K562 (cell line): ENCODE measurements at regions of chr6 and their contacts with region 1.

Region 1: GRCh38 chr6:24581084-24581669 is 64.8 kb downstream of the KIAA0319 start:
- DNase-seq: peak; percentile 54 to 83 (median 61)
- ATAC-seq: peak; percentile 97
- H3K4me3 ChIP-seq: no peak overlapping the region
- H3K27ac ChIP-seq: no peak overlapping the region
- H3K4me1 ChIP-seq: no peaks in the 10 kb centered on the region
- H3K27me3 ChIP-seq: peaks cover 14 to 20% of the 10 kb centered on the region in 2 experiments
- CTCF ChIP-seq: peak; percentile 82 to 90 (median 86)
- EP300 ChIP-seq: no peak
- POLR2A ChIP-seq: no peak
- RAD21 ChIP-seq: peak; percentile 72 to 89

Region 2: GRCh38 chr6:24431045-24431451 is 150.1 kb before region 1 on chr6:
- CTCF ChIA-PET with region 1: interaction called, 3 read pairs
- POLR2A ChIA-PET with region 1: no interaction called
- in situ Hi-C with region 1: no loop called
- intact Hi-C with region 1: loop called (anchors 5 kb)
- DNase-seq: peak; percentile 67 to 71 (median 68)
- ATAC-seq: peak; percentile 90
- H3K4me3 ChIP-seq: no peak overlapping the region
- H3K27ac ChIP-seq: no peak overlapping the region
- H3K4me1 ChIP-seq: peaks cover 0 to 8% of the 10 kb centered on the region in 2 experiments; a peak in 3 of 5 replicates
- H3K27me3 ChIP-seq: no peaks in the 10 kb centered on the region
- CTCF ChIP-seq: peak; percentile 65 to 84 (median 77)
- EP300 ChIP-seq: no peak
- POLR2A ChIP-seq: no peak
- RAD21 ChIP-seq: peak; percentile 36 to 74; a peak in 3 of 4 replicates

Region 3: GRCh38 chr6:24631671-24632070 is 50.5 kb after region 1 on chr6:
- CTCF ChIA-PET with region 1: no interaction called
- POLR2A ChIA-PET with region 1: no interaction called
- in situ Hi-C with region 1: no loop called
- intact Hi-C with region 1: no loop called
- DNase-seq: no peak
- ATAC-seq: no peak; the same call in 2 of the 3 replicates
- H3K4me3 ChIP-seq: no peak overlapping the region
- H3K27ac ChIP-seq: no peak overlapping the region
- H3K4me1 ChIP-seq: no peaks in the 10 kb centered on the region
- H3K27me3 ChIP-seq: peaks cover 14 to 17% of the 10 kb centered on the region in 2 experiments
- CTCF ChIP-seq: no peak
- EP300 ChIP-seq: no peak
- POLR2A ChIP-seq: no peak
- RAD21 ChIP-seq: no peak

Region 4: GRCh38 chr6:24689964-24690363 is 108.8 kb after region 1 on chr6:
- CTCF ChIA-PET with region 1: interaction called, 67 read pairs
- POLR2A ChIA-PET with region 1: no interaction called
- in situ Hi-C with region 1: loop called (anchors 5 kb)
- intact Hi-C with region 1: loop called (anchors 1 kb)
- DNase-seq: no peak
- ATAC-seq: no peak
- H3K4me3 ChIP-seq: no peak overlapping the region
- H3K27ac ChIP-seq: no peak overlapping the region
- H3K4me1 ChIP-seq: no peaks in the 10 kb centered on the region
- H3K27me3 ChIP-seq: no peaks in the 10 kb centered on the region
- CTCF ChIP-seq: no peak
- EP300 ChIP-seq: no peak
- POLR2A ChIP-seq: no peak
- RAD21 ChIP-seq: no peak

Region 5: DNA sequence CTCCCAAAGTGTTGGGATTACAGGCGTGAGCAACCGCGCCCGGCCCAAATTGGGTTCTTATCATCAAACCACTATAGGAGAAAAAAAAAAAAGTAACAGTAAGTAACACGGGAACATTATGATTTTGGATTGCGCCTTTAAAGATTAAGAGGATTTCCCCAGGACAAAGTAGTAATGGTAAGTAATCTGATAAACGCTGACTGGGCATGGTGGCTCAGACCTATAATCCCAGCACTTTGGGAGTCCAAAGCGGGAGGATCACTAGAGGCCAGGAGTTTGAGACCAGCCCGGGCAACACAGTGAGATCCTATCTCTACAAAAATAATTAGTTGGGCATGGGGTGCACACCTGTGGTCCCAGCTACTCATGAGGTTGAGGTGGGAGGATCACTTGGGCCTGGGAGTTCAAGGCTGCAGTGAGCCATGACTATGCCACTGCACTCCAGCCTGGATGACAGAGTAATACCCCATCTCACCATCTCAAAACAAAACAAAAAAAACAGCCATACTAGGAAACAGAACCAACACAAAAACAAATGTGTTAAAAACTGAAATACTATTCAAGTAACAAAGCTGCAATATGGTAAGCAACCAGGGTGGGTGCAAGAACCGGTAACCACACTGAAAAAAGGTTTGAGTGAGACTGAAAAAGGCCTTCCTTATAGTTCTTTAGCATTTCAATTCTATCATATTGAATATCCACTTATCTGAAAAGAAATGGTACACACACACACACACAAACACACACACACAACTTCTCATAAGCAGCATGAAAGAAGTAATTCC is 129.5 kb after region 1 on chr6:
- CTCF ChIA-PET with region 1: no interaction called
- POLR2A ChIA-PET with region 1: no interaction called
- in situ Hi-C with region 1: no loop called
- intact Hi-C with region 1: no loop called
- DNase-seq: no peak
- ATAC-seq: no peak
- H3K4me3 ChIP-seq: no peak overlapping the region
- H3K27ac ChIP-seq: no peak overlapping the region
- H3K4me1 ChIP-seq: no peaks in the 10 kb centered on the region; a peak in 1 of 5 replicates
- H3K27me3 ChIP-seq: no peaks in the 10 kb centered on the region
- CTCF ChIP-seq: no peak
- EP300 ChIP-seq: no peak
- POLR2A ChIP-seq: no peak
- RAD21 ChIP-seq: no peak

Region 6: GRCh38 chr6:24743265-24743943 is 162.2 kb after region 1 on chr6:
- CTCF ChIA-PET with region 1: no interaction called
- POLR2A ChIA-PET with region 1: no interaction called
- in situ Hi-C with region 1: no loop called
- intact Hi-C with region 1: no loop called
- DNase-seq: peak; percentile 38 to 56 (median 47)
- ATAC-seq: peak; percentile 80
- H3K4me3 ChIP-seq: no peak overlapping the region
- H3K27ac ChIP-seq: peak overlapping the region; percentile 70; the same call in 2 of the 3 replicates
- H3K4me1 ChIP-seq: peaks cover 0 to 14% of the 10 kb centered on the region in 2 experiments; a peak in 4 of 5 replicates
- H3K27me3 ChIP-seq: no peaks in the 10 kb centered on the region
- CTCF ChIP-seq: no peak
- EP300 ChIP-seq: no peak
- POLR2A ChIP-seq: no peak
- RAD21 ChIP-seq: no peak

Region 7: GRCh38 chr6:24766680-24767462 is 185.7 kb after region 1 on chr6:
- CTCF ChIA-PET with region 1: interaction called, 21 read pairs
- POLR2A ChIA-PET with region 1: no interaction called
- in situ Hi-C with region 1: loop called (anchors 10 kb)
- intact Hi-C with region 1: loop called (anchors 1 kb)
- DNase-seq: no peak
- ATAC-seq: peak; percentile 59
- H3K4me3 ChIP-seq: no peak overlapping the region
- H3K27ac ChIP-seq: no peak overlapping the region
- H3K4me1 ChIP-seq: no peaks in the 10 kb centered on the region; a peak in 1 of 5 replicates
- H3K27me3 ChIP-seq: no peaks in the 10 kb centered on the region
- CTCF ChIP-seq: peak in 2 of 3 experiments; percentile 11 to 76; a peak in 2 of 6 replicates
- EP300 ChIP-seq: no peak
- POLR2A ChIP-seq: no peak
- RAD21 ChIP-seq: peak; percentile 77 to 78

Region 8: DNA sequence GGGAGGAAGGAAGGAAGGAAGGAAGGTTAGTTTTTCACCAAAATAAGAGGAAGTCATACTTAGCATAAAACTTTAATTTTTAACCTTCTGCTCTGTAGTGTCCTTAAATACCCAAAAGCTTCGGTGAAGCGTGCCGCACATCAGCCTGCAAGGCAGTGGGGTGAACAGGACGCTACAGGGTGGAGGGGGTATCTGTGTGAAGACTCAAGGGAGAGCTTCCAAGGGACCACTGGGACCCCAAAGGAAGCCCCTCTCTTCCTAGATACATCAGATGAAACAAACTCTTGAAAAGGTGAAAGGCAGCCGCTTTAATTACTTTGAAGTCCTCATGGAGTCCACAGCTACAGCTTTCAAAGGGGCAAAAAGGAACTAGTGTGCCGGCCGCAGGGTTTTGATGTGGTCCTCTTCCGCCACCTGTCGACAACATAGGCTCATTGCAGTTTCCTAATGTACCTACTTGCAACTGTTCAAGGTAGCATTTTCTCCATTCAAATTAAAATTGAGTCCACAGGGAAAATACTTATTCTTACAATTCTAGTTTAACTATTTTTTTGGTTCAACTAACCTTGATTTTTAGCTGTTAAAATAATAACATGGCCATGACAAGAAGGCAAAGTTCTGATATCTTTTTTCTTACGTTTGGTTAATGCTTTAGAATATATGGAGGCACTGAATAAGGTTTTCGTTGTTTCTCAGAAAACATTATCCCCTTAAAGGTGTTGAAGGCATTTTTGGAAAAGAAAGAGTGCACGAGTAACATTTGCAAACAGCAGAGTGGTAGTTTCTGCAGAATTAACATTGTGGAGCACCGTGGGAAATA is 489.6 kb after region 1 on chr6:
- CTCF ChIA-PET with region 1: interaction called, 7 read pairs
- POLR2A ChIA-PET with region 1: no interaction called
- in situ Hi-C with region 1: no loop called
- intact Hi-C with region 1: loop called (anchors 2 kb)
- DNase-seq: peak; percentile 71 to 81 (median 72)
- ATAC-seq: peak; percentile 94
- H3K4me3 ChIP-seq: no peak overlapping the region
- H3K27ac ChIP-seq: no peak overlapping the region
- H3K4me1 ChIP-seq: no peaks in the 10 kb centered on the region
- H3K27me3 ChIP-seq: peaks cover 2 to 12% of the 10 kb centered on the region in 2 experiments; a peak in 3 of 5 replicates
- CTCF ChIP-seq: peak; percentile 77 to 96 (median 87)
- EP300 ChIP-seq: no peak
- POLR2A ChIP-seq: no peak
- RAD21 ChIP-seq: peak; percentile 96 to 97